GM10248 (cell line): ENCODE measurements at regions of chr3 and their contacts with region 1.

Region 1: GRCh38 chr3:178436773-178437172 is 99.5 kb upstream of the KCNMB2 start:
- DNase-seq: peak; percentile 53
- CTCF ChIP-seq: peak; percentile 45

Region 2: GRCh38 chr3:178329936-178330335 is 106.8 kb before region 1 on chr3:
- CTCF ChIA-PET with region 1: no interaction called
- POLR2A ChIA-PET with region 1: no interaction called
- DNase-seq: no peak
- CTCF ChIP-seq: no peak

Region 3: GRCh38 chr3:178367817-178368617 is 68.8 kb before region 1 on chr3:
- CTCF ChIA-PET with region 1: no interaction called
- POLR2A ChIA-PET with region 1: no interaction called
- DNase-seq: no peak
- CTCF ChIP-seq: no peak

Region 4: DNA sequence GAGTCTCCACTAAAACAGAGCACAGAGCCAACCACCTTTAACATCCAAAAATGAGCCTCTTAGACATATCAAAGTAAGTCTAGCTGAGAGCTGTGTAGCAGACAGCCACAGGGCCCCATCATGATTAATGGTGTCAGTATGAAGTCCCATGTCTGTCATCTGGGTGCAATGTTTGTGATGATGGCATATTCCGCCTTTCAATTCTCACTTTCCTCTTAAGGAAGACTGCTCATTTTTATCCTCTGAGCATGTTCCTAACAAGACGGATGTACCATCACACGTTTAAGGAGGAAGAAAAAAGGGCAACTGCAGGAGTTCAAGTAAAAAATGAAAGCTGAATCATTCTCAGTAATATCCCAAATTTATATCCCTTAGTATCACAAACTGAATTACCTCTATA is 13.7 kb after region 1 on chr3:
- CTCF ChIA-PET with region 1: interaction called, 11 read pairs
- POLR2A ChIA-PET with region 1: no interaction called
- DNase-seq: no peak
- CTCF ChIP-seq: no peak

Region 5: GRCh38 chr3:178966299-178967176 is 529.8 kb after region 1 on chr3:
- CTCF ChIA-PET with region 1: interaction called, 51 read pairs
- POLR2A ChIA-PET with region 1: no interaction called
- DNase-seq: peak; percentile 11
- CTCF ChIP-seq: peak; percentile 43